Naive thymus-derived CD4-positive, alpha-beta T cell (primary cell): ENCODE measurements at regions of chr12 and their contacts with region 1.

Region 1: GRCh38 chr12:22334410-22335290 is at the start of gene ST8SIA1:
- DNase-seq: peak in 8 of 9 donors; percentile 13 to 36 (median 30)
- ATAC-seq: peak; percentile 57
- H3K4me3 ChIP-seq: peak within 1 kb of the TSS; percentile 85
- H3K4me3 Mint-ChIP-seq: peak within 1 kb of the TSS; percentile 90 to 98 (median 93)
- H3K27ac ChIP-seq: no peak within 1 kb of the TSS
- H3K27ac Mint-ChIP-seq: peak within 1 kb of the TSS in 6 of 9 donors; percentile 28 to 87 (median 83)
- H3K4me1 ChIP-seq: peaks cover 0 to 22% of the 10 kb centered on the region in 2 donors
- H3K4me1 Mint-ChIP-seq: peaks cover 16 to 27% (median 18%) of the 10 kb centered on the region in 7 donors
- H3K27me3 ChIP-seq: peaks cover 0 to 5% of the 10 kb centered on the region in 2 donors
- H3K27me3 Mint-ChIP-seq: peaks cover 0 to 62% (median 25%) of the 10 kb centered on the region in 5 donors
- total RNA-seq, gene ST8SIA1: 0.53 to 6.0 (median 4.0) TPM

Region 2: GRCh38 chr12:21451529-21451928 is 883.1 kb before region 1 on chr12:
- CTCF ChIA-PET with region 1: no interaction called
- POLR2A ChIA-PET with region 1: no interaction called
- intact Hi-C with region 1: loop called in 1 of 2 experiments (anchors 10 kb)
- DNase-seq: no peak
- ATAC-seq: no peak
- H3K4me3 ChIP-seq: no peak overlapping the region
- H3K4me3 Mint-ChIP-seq: no peak overlapping the region
- H3K27ac ChIP-seq: no peak overlapping the region
- H3K27ac Mint-ChIP-seq: peak overlapping the region in 4 of 9 donors; percentile 6 to 51 (median 28)
- H3K4me1 ChIP-seq: peaks cover 2 to 21% of the 10 kb centered on the region in 2 donors
- H3K4me1 Mint-ChIP-seq: peaks cover 2 to 48% (median 29%) of the 10 kb centered on the region in 7 donors
- H3K27me3 ChIP-seq: no peaks in the 10 kb centered on the region
- H3K27me3 Mint-ChIP-seq: no peaks in the 10 kb centered on the region

Region 3: DNA sequence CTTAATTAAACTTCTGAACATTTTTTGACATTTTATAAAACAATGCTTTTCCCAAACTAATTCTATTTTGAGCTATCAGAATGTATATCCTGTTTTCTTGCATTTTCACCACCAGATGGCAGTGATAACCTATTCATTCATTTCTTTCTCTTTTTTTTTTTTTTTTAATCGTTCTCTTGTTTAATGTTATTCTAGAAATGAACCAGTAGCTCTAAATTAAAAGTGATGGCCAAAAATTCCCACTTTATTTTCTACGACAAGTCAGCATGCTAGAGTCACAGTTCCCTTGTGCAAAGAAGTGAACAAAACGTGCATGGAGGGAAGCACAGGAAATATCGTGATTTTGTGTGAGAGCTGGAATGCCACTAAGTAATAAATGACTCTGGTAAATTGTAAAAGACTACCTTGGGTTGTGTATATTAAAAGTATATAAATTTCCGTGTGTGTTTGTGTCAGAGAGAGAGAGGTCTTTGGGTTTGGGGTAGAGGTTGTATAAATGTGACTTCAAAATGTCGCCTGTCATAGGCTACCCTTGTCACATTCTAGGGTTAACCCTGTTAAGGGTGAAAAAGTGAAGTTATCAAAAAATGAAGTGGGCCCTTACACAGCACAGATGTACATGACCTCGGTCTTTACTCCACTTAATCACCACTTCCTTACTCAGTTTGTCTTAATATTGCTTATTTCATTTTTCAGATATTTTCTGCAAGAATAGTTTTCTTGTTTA is 636.6 kb before region 1 on chr12:
- CTCF ChIA-PET with region 1: interaction called, 7 read pairs
- POLR2A ChIA-PET with region 1: no interaction called
- intact Hi-C with region 1: loop called (anchors 1 kb)
- DNase-seq: peak in 5 of 9 donors; percentile 23 to 48 (median 45)
- ATAC-seq: peak; percentile 54
- H3K4me3 ChIP-seq: no peak overlapping the region
- H3K4me3 Mint-ChIP-seq: peak overlapping the region in 6 of 10 donors; percentile 21 to 83 (median 52)
- H3K27ac ChIP-seq: no peak overlapping the region
- H3K27ac Mint-ChIP-seq: no peak overlapping the region
- H3K4me1 ChIP-seq: peaks cover 0 to 5% of the 10 kb centered on the region in 2 donors
- H3K4me1 Mint-ChIP-seq: peaks cover 0 to 22% (median 11%) of the 10 kb centered on the region in 7 donors
- H3K27me3 ChIP-seq: no peaks in the 10 kb centered on the region
- H3K27me3 Mint-ChIP-seq: peaks cover 0 to 15% (median 0%) of the 10 kb centered on the region in 5 donors

Region 4: GRCh38 chr12:22083167-22083566 is 251.5 kb before region 1 on chr12:
- CTCF ChIA-PET with region 1: no interaction called
- POLR2A ChIA-PET with region 1: no interaction called
- intact Hi-C with region 1: loop called (anchors 1 kb)
- DNase-seq: peak in 7 of 9 donors; percentile 18 to 57 (median 47)
- ATAC-seq: peak; percentile 56
- H3K4me3 ChIP-seq: no peak overlapping the region
- H3K4me3 Mint-ChIP-seq: no peak overlapping the region
- H3K27ac ChIP-seq: no peak overlapping the region
- H3K27ac Mint-ChIP-seq: no peak overlapping the region
- H3K4me1 ChIP-seq: no peaks in the 10 kb centered on the region
- H3K4me1 Mint-ChIP-seq: no peaks in the 10 kb centered on the region
- H3K27me3 ChIP-seq: no peaks in the 10 kb centered on the region
- H3K27me3 Mint-ChIP-seq: peaks cover 0 to 9% (median 0%) of the 10 kb centered on the region in 5 donors

Region 5: DNA sequence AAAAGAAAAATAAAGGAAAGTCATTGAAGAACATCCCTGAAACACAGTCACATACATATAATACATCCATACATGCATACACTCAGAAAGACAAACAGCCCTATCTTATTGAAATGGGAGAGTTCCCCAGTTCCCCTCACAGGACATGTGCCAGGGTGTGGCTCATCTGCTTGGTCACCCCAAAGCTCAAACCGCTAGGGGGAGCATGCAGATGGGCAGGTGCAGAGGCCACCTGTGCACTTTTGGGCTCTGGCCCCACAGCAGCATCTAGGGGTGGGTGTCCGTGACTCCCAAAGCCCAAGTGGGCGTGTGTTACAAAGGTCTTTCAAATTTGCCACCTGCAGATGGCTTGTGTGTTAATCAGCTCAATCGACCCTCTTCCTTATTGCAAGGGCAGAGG is 213.4 kb before region 1 on chr12:
- CTCF ChIA-PET with region 1: interaction called, 3 read pairs
- POLR2A ChIA-PET with region 1: no interaction called
- intact Hi-C with region 1: loop called in 1 of 2 experiments (anchors 1 kb)
- DNase-seq: peak in 2 of 9 donors; percentile 7 to 13
- ATAC-seq: no peak
- H3K4me3 ChIP-seq: no peak overlapping the region
- H3K4me3 Mint-ChIP-seq: no peak overlapping the region
- H3K27ac ChIP-seq: no peak overlapping the region
- H3K27ac Mint-ChIP-seq: no peak overlapping the region
- H3K4me1 ChIP-seq: no peaks in the 10 kb centered on the region
- H3K4me1 Mint-ChIP-seq: peaks cover 0 to 3% (median 0%) of the 10 kb centered on the region in 7 donors
- H3K27me3 ChIP-seq: no peaks in the 10 kb centered on the region
- H3K27me3 Mint-ChIP-seq: peaks cover 0 to 6% (median 0%) of the 10 kb centered on the region in 5 donors

Region 6: GRCh38 chr12:22255097-22255496 is 79.6 kb before region 1 on chr12:
- CTCF ChIA-PET with region 1: no interaction called
- POLR2A ChIA-PET with region 1: no interaction called
- intact Hi-C with region 1: no loop called
- DNase-seq: no peak
- ATAC-seq: no peak
- H3K4me3 ChIP-seq: no peak overlapping the region
- H3K4me3 Mint-ChIP-seq: no peak overlapping the region
- H3K27ac ChIP-seq: no peak overlapping the region
- H3K27ac Mint-ChIP-seq: no peak overlapping the region
- H3K4me1 ChIP-seq: no peaks in the 10 kb centered on the region
- H3K4me1 Mint-ChIP-seq: peaks cover 0 to 5% (median 2%) of the 10 kb centered on the region in 7 donors
- H3K27me3 ChIP-seq: no peaks in the 10 kb centered on the region
- H3K27me3 Mint-ChIP-seq: peaks cover 0 to 7% (median 0%) of the 10 kb centered on the region in 5 donors

Region 7: GRCh38 chr12:22310275-22310674 is 24.4 kb before region 1 on chr12:
- CTCF ChIA-PET with region 1: no interaction called
- POLR2A ChIA-PET with region 1: no interaction called
- intact Hi-C with region 1: no loop called
- DNase-seq: no peak
- ATAC-seq: no peak
- H3K4me3 ChIP-seq: no peak overlapping the region
- H3K4me3 Mint-ChIP-seq: no peak overlapping the region
- H3K27ac ChIP-seq: no peak overlapping the region
- H3K27ac Mint-ChIP-seq: no peak overlapping the region
- H3K4me1 ChIP-seq: no peaks in the 10 kb centered on the region
- H3K4me1 Mint-ChIP-seq: peaks cover 0 to 5% (median 0%) of the 10 kb centered on the region in 7 donors
- H3K27me3 ChIP-seq: no peaks in the 10 kb centered on the region
- H3K27me3 Mint-ChIP-seq: peaks cover 0 to 17% (median 6%) of the 10 kb centered on the region in 5 donors

Region 8: GRCh38 chr12:22321638-22322037 is 13.0 kb before region 1 on chr12:
- CTCF ChIA-PET with region 1: interaction called, 4 read pairs
- POLR2A ChIA-PET with region 1: no interaction called
- intact Hi-C with region 1: loop called in 1 of 2 experiments (anchors 1 kb)
- DNase-seq: peak in 1 of 9 donors; percentile 6
- ATAC-seq: peak; percentile 89
- H3K4me3 ChIP-seq: no peak overlapping the region
- H3K4me3 Mint-ChIP-seq: no peak overlapping the region
- H3K27ac ChIP-seq: no peak overlapping the region
- H3K27ac Mint-ChIP-seq: no peak overlapping the region
- H3K4me1 ChIP-seq: peaks cover 0 to 17% of the 10 kb centered on the region in 2 donors
- H3K4me1 Mint-ChIP-seq: peaks cover 0 to 15% (median 8%) of the 10 kb centered on the region in 7 donors
- H3K27me3 ChIP-seq: no peaks in the 10 kb centered on the region
- H3K27me3 Mint-ChIP-seq: no peaks in the 10 kb centered on the region

Region 9: GRCh38 chr12:22350886-22351285 is 16.2 kb after region 1 on chr12:
- CTCF ChIA-PET with region 1: no interaction called
- POLR2A ChIA-PET with region 1: no interaction called
- intact Hi-C with region 1: no loop called
- DNase-seq: no peak
- ATAC-seq: no peak
- H3K4me3 ChIP-seq: no peak overlapping the region
- H3K4me3 Mint-ChIP-seq: no peak overlapping the region
- H3K27ac ChIP-seq: no peak overlapping the region
- H3K27ac Mint-ChIP-seq: no peak overlapping the region
- H3K4me1 ChIP-seq: no peaks in the 10 kb centered on the region
- H3K4me1 Mint-ChIP-seq: peaks cover 0 to 3% (median 0%) of the 10 kb centered on the region in 7 donors
- H3K27me3 ChIP-seq: no peaks in the 10 kb centered on the region
- H3K27me3 Mint-ChIP-seq: peaks cover 0 to 7% (median 0%) of the 10 kb centered on the region in 5 donors

Region 10: DNA sequence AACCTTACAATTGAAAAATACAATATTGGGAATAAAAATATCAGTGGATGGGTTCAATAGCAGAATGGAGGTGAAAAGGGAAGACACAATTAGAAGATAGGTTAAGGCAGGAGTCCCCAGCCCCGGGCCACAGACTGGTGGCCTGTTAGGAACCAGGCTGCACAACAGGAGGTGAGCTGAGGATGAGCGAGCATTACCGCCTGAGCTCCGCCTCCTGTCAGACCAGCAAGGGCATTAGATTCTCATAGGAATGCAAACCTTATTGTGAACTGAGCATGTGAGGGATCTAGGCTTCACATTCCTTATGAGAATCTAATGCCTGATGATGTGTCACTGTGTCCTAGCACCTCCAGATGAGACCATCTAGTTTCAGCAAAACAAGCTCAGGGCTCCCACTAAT is 27.1 kb after region 1 on chr12:
- CTCF ChIA-PET with region 1: no interaction called
- POLR2A ChIA-PET with region 1: no interaction called
- intact Hi-C with region 1: no loop called
- DNase-seq: no peak
- ATAC-seq: no peak
- H3K4me3 ChIP-seq: no peak overlapping the region
- H3K4me3 Mint-ChIP-seq: no peak overlapping the region
- H3K27ac ChIP-seq: no peak overlapping the region
- H3K27ac Mint-ChIP-seq: no peak overlapping the region
- H3K4me1 ChIP-seq: no peaks in the 10 kb centered on the region
- H3K4me1 Mint-ChIP-seq: no peaks in the 10 kb centered on the region
- H3K27me3 ChIP-seq: no peaks in the 10 kb centered on the region
- H3K27me3 Mint-ChIP-seq: peaks cover 0 to 8% (median 3%) of the 10 kb centered on the region in 5 donors

Region 11: DNA sequence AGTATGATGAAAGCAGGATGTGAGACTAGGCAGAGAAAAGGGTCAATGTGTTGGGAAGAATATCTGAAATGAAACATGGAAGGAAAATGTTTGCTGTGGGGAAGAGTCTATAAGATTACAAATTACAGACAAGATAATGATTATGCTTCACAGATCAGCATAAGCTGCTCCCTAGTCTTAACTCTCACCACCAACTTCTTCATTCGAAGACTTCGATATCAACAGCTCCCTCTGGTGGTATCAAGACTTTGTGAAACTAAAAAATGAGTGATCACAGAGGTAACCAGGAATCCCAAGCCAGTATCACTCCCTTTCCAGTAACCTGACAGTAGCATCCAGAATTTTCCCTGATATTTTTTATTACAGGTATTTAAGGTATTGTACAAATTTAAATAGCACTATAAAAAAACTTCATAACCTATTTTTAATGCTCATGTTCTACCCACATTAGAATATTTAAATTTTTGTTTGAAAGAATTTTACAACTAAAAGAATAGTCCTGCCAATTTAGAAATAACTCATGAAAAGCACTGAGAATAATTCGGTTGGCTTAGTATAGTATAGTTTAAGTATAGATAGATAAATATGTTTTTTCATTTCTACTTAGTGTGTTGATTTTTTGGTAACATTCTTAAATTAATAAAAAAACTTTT is 125.3 kb after region 1 on chr12:
- CTCF ChIA-PET with region 1: interaction called, 14 read pairs
- POLR2A ChIA-PET with region 1: interaction called, 3 read pairs
- intact Hi-C with region 1: loop called in 1 of 2 experiments (anchors 5 kb)
- DNase-seq: peak in 6 of 9 donors; percentile 22 to 43 (median 34)
- ATAC-seq: peak; percentile 81
- H3K4me3 ChIP-seq: no peak overlapping the region
- H3K4me3 Mint-ChIP-seq: no peak overlapping the region
- H3K27ac ChIP-seq: no peak overlapping the region
- H3K27ac Mint-ChIP-seq: peak overlapping the region in 2 of 9 donors; percentile 4 to 30
- H3K4me1 ChIP-seq: no peaks in the 10 kb centered on the region
- H3K4me1 Mint-ChIP-seq: peaks cover 0 to 3% (median 0%) of the 10 kb centered on the region in 7 donors
- H3K27me3 ChIP-seq: no peaks in the 10 kb centered on the region
- H3K27me3 Mint-ChIP-seq: no peaks in the 10 kb centered on the region